ENCODE measurements at regions of chr15 and their contacts with region 1.

Region 1: GRCh38 chr15:63752075-63752684 is 81.6 kb downstream of the HERC1 start:
- DNase-seq: peak; percentile 59
- H3K4me3 Mint-ChIP-seq: no peak overlapping the region
- H3K27ac Mint-ChIP-seq: no peak overlapping the region
- H3K4me1 Mint-ChIP-seq: no peaks in the 10 kb centered on the region
- H3K27me3 Mint-ChIP-seq: no peaks in the 10 kb centered on the region

Region 2: GRCh38 chr15:63610200-63610841 is 141.9 kb before region 1 on chr15:
- CTCF ChIA-PET with region 1: interaction called, 21 read pairs
- DNase-seq: peak; percentile 88
- H3K4me3 Mint-ChIP-seq: no peak overlapping the region
- H3K27ac Mint-ChIP-seq: peak overlapping the region; percentile 90
- H3K4me1 Mint-ChIP-seq: peaks cover 42% of the 10 kb centered on the region
- H3K27me3 Mint-ChIP-seq: no peaks in the 10 kb centered on the region

Region 3: DNA sequence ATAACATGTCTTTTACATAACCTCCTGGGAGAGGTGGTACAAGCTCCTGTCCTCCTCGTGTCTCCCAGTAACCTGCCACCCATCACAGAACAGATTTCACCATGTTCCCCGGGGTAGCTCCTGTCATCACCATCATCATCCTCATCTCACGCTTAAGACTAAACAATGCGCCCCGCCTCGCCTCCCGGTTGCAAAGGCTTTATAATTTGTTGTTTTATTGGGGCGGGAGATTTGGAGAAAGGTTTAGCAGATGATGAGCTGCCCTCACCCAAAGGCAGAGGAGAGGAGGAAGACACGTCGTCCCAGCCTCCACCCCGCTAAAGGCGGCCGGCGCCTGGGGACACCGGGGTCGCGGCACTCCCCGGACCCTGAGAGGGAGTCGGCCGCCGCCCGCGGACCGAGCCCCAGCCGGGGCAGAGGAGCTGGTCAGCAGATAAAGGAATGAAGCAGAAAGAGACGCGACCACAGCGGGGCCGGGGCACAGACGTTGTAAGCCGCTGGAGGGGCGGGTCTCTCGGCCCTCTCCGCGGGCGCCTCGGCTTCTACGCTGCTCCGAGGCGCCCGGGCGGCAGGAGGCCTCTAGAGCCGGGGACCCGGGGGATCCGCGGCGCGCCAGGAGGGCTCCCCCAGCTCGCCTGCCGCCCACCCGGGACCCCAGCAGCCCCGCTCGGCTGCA is 81.0 kb after region 1 on chr15:
- CTCF ChIA-PET with region 1: interaction called, 11 read pairs
- DNase-seq: peak; percentile 61
- H3K4me3 Mint-ChIP-seq: peak overlapping the region; percentile 97
- H3K27ac Mint-ChIP-seq: peak overlapping the region; percentile 84
- H3K4me1 Mint-ChIP-seq: peaks cover 40% of the 10 kb centered on the region
- H3K27me3 Mint-ChIP-seq: peaks cover 8% of the 10 kb centered on the region

Region 4: DNA sequence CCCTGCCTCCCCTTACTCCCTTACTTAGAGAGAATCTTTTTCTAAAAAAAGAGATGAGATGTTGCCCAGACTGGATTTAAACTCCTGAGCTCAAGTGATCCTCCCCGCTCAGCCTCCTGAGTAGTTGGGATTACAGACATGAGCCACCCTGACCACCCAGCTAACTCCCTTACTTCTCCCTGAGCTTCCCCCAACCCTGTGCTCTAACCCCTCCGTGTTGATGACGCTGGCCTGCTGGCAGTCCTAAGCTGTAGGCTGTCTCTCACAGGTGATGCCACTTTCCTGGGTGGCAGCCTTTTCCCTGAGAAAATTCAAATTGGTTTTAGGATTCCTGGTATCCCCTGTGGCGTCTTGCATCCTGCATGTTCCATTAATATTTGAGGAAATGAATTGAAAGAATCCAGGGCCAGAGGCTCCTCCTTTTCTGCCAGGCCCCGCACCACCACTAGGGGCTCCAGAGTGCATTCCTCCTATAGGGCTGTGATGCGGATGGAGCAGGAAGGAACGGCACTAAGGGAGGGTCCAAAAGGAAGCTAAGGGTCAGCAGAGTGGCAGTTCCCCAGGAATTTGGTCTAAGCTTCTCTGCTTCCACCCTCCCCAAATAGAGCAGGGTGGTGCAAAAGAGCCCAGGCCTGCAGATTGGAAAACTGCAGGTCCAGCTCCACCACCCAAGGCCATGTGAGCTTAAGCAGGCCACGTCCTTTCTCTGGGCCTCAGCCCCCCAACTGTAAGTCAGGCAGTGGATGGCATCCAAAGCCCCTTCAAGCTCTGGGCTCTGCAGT is 193.0 kb after region 1 on chr15:
- CTCF ChIA-PET with region 1: interaction called, 13 read pairs
- DNase-seq: peak; percentile 78
- H3K4me3 Mint-ChIP-seq: no peak overlapping the region
- H3K27ac Mint-ChIP-seq: no peak overlapping the region
- H3K4me1 Mint-ChIP-seq: peaks cover 5% of the 10 kb centered on the region
- H3K27me3 Mint-ChIP-seq: no peaks in the 10 kb centered on the region

Region 5: DNA sequence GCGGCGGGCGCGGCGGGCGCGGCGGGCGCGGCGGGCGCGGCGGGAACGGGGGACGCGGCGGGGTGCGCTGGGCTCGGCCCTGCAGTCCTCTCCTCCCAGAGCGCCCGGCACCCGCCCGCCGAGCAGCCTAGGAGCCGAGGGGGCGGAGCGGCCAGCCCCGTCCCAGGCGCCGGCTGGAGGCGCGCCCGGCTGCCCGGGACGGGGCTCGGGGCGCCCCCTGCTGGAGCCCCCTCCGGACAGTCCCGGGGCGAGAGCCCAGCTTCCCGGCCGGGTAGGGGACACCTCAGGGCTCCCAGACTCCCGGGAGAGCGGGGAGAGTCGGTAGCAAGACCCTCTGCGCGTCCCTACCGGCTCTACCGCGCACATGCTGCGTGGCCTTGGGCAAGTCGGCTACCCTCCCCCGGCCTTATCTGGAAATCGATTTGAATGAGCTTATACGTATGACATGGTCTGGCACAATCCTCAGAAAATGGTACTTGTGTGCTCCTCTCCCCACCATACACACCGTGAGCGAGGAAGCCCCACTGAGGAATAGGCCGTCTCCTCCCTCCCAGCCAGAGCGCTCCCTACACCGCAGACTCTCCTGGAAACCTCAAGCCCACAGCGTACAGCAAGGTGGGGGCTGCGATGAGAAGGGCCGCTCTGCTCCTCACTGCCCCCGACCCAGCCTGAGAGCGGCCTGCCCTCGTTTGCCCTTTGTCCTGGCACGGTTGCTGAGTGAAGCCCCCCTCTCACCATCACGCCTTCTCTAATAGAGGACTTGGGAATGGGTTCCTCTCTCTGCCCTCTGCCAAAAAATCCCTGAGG is 294.4 kb after region 1 on chr15 and contains the start of gene DAPK2:
- CTCF ChIA-PET with region 1: interaction called, 48 read pairs
- DNase-seq: peak; percentile 73
- H3K4me3 Mint-ChIP-seq: peak within 1 kb of the TSS; percentile 64
- H3K27ac Mint-ChIP-seq: peak within 1 kb of the TSS; percentile 19
- H3K4me1 Mint-ChIP-seq: peaks cover 4% of the 10 kb centered on the region
- H3K27me3 Mint-ChIP-seq: peaks cover 70% of the 10 kb centered on the region